Mammary epithelial cell (primary cell): ENCODE measurements at regions of chr11 and their contacts with region 1.

Region 1: GRCh38 chr11:118198370-118198769 is 21.9 kb upstream of the SCN2B start:
- DNase-seq: peak; percentile 29
- H3K4me3 ChIP-seq: peak overlapping the region in 1 of 3 experiments; percentile 30
- H3K27ac ChIP-seq: no peak overlapping the region
- H3K4me1 ChIP-seq: peaks cover 18% of the 10 kb centered on the region
- H3K27me3 ChIP-seq: no peaks in the 10 kb centered on the region
- CTCF ChIP-seq: peak; percentile 85 to 97

Region 2: GRCh38 chr11:118171269-118172062 is 26.9 kb before region 1 on chr11:
- CTCF ChIA-PET with region 1: interaction called, 8 read pairs
- dilution Hi-C with region 1: no loop called
- in situ Hi-C with region 1: no loop called
- intact Hi-C with region 1: loop called (anchors 1 kb)
- DNase-seq: peak; percentile 37
- H3K4me3 ChIP-seq: no peak overlapping the region
- H3K27ac ChIP-seq: no peak overlapping the region
- H3K4me1 ChIP-seq: peaks cover 23% of the 10 kb centered on the region
- H3K27me3 ChIP-seq: no peaks in the 10 kb centered on the region
- CTCF ChIP-seq: peak; percentile 64 to 91

Region 3: DNA sequence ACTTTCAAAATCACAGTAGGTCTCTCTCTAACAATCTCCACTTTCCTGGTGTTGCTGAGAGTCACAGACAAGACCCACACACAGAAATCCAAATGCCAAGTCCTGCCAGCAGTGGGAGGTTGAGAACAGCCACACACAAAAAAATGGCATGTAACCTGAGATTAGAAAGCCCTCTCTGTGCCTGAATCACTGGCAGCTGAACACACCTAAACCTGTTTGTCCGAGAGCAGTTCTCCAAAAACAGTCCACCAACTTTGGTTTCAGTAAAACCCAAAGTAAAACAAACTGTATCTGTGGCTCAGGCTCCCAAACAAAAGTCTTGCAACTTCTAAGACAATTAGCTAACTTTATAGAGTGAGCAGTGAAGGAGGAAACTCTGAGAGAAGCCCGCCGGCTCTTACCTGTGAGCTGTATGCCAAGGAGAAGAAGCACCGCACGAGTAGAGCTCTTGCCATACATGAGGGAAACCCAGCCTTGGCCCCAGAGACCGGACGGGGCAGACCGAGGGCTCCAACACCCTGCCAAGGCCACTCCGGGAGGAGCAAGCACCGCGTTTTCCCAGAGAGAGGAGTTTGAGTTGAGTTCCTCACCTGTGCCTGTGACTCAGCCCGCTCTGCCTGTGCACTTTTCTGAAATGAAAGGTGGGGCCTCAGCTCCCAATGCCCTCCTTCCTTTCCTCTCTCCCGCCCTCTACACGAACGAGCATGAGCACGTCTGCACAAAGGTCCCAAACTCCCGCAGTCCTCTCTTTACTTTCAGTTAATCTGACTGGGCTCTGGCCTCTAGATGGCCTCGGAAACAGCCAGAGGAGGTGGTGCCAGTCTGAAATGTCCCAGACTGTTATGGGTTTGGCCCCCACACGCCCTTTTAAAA is 65.6 kb after region 1 on chr11 and contains the start of gene MPZL2:
- CTCF ChIA-PET with region 1: interaction called, 10 read pairs
- dilution Hi-C with region 1: no loop called
- in situ Hi-C with region 1: no loop called
- intact Hi-C with region 1: loop called (anchors 1 kb)
- DNase-seq: peak; percentile 98
- H3K4me3 ChIP-seq: peak within 1 kb of the TSS; percentile 59 to 91 (median 78)
- H3K27ac ChIP-seq: peak within 1 kb of the TSS; percentile 96
- H3K4me1 ChIP-seq: peaks cover 48% of the 10 kb centered on the region
- H3K27me3 ChIP-seq: no peaks in the 10 kb centered on the region
- CTCF ChIP-seq: peak in 1 of 2 donors; percentile 39
- total RNA-seq, gene MPZL2: 82.5 to 92.3 TPM

Region 4: GRCh38 chr11:118353084-118353710 is 154.8 kb after region 1 on chr11:
- CTCF ChIA-PET with region 1: no interaction called
- dilution Hi-C with region 1: no loop called
- in situ Hi-C with region 1: loop called in 1 of 2 experiments (anchors 5 kb)
- intact Hi-C with region 1: loop called (anchors 1 kb)
- DNase-seq: no peak
- H3K4me3 ChIP-seq: no peak overlapping the region
- H3K27ac ChIP-seq: no peak overlapping the region
- H3K4me1 ChIP-seq: no peaks in the 10 kb centered on the region
- H3K27me3 ChIP-seq: no peaks in the 10 kb centered on the region
- CTCF ChIP-seq: peak; percentile 17 to 50

Region 5: DNA sequence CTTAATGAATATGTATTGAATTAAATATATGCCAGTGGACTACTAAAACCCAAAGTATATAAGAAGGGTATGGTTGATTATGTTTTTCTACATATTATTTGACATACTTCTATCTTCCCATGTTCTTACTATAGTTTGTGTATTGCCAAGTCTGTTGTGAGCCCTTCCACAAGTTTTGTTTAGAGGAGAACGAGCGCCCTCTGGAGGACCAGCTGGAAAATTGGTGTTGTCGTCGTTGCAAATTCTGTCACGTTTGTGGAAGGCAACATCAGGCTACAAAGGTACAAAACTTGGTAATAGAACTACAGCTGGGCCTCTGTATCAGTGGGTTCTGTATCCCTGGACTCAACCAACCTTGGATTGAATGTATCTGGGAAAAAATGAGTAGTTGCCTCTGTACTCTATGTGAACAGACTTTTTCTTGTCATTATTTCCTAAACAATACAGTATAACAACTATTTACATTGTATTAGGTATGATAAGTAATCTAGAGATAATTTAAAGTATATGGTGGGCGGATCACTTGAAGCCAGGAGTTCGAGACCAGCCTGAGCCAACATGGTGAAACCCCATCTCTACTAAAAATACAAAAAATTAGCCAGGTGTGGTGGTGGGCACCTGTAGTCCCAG is 290.2 kb after region 1 on chr11:
- CTCF ChIA-PET with region 1: no interaction called
- dilution Hi-C with region 1: no loop called
- in situ Hi-C with region 1: no loop called
- intact Hi-C with region 1: loop called (anchors 1 kb)
- DNase-seq: peak; percentile 47
- H3K4me3 ChIP-seq: no peak overlapping the region
- H3K27ac ChIP-seq: no peak overlapping the region
- H3K4me1 ChIP-seq: no peaks in the 10 kb centered on the region
- H3K27me3 ChIP-seq: no peaks in the 10 kb centered on the region
- CTCF ChIP-seq: peak; percentile 83 to 91